Sigmoid colon (tissue), 7 donors: ENCODE measurements at regions of chr7 and their contacts with region 1.

Region 1: GRCh38 chr7:22103255-22103969 is 157.7 kb upstream of the CDCA7L start:
- DNase-seq: no peak
- H3K4me3 ChIP-seq: no peak overlapping the region
- H3K27ac ChIP-seq: no peak overlapping the region
- H3K4me1 ChIP-seq: no peaks in the 10 kb centered on the region
- H3K27me3 ChIP-seq: no peaks in the 10 kb centered on the region
- CTCF ChIP-seq: peak; percentile 11 to 67 (median 46)
- EP300 ChIP-seq: no peak
- POLR2A ChIP-seq: no peak

Region 2: GRCh38 chr7:22295402-22296264 is 192.2 kb after region 1 on chr7:
- intact Hi-C with region 1: loop called (anchors 10 kb)
- DNase-seq: no peak
- H3K4me3 ChIP-seq: no peak overlapping the region
- H3K27ac ChIP-seq: peak overlapping the region in 1 of 4 donors; percentile 53
- H3K4me1 ChIP-seq: no peaks in the 10 kb centered on the region
- H3K27me3 ChIP-seq: no peaks in the 10 kb centered on the region
- CTCF ChIP-seq: no peak
- EP300 ChIP-seq: no peak
- POLR2A ChIP-seq: no peak